Panc1 (cell line): ENCODE measurements at regions of chr10 and their contacts with region 1.

Region 1: GRCh38 chr10:58781873-58782488 is 269.3 kb downstream of the BICC1 start:
- DNase-seq: peak; percentile 52
- ATAC-seq: peak; percentile 70; the same call in 1 of the 2 replicates
- H3K4me3 ChIP-seq: no peak overlapping the region
- H3K27ac ChIP-seq: no peak overlapping the region
- H3K4me1 ChIP-seq: no peaks in the 10 kb centered on the region
- H3K27me3 ChIP-seq: no peaks in the 10 kb centered on the region
- CTCF ChIP-seq: peak; percentile 69; the same call in 1 of the 2 replicates

Region 2: GRCh38 chr10:58765910-58766309 is 16.1 kb before region 1 on chr10:
- CTCF ChIA-PET with region 1: no interaction called
- POLR2A ChIA-PET with region 1: no interaction called
- in situ Hi-C with region 1: no loop called
- intact Hi-C with region 1: no loop called
- DNase-seq: no peak
- ATAC-seq: no peak
- H3K4me3 ChIP-seq: no peak overlapping the region
- H3K27ac ChIP-seq: no peak overlapping the region
- H3K4me1 ChIP-seq: no peaks in the 10 kb centered on the region
- H3K27me3 ChIP-seq: no peaks in the 10 kb centered on the region
- CTCF ChIP-seq: no peak

Region 3: GRCh38 chr10:59181668-59182067 is 399.7 kb after region 1 on chr10:
- CTCF ChIA-PET with region 1: no interaction called
- POLR2A ChIA-PET with region 1: no interaction called
- in situ Hi-C with region 1: no loop called
- intact Hi-C with region 1: loop called (anchors 5 kb)
- DNase-seq: peak; percentile 30
- ATAC-seq: peak; percentile 89
- H3K4me3 ChIP-seq: no peak overlapping the region
- H3K27ac ChIP-seq: no peak overlapping the region
- H3K4me1 ChIP-seq: no peaks in the 10 kb centered on the region
- H3K27me3 ChIP-seq: no peaks in the 10 kb centered on the region
- CTCF ChIP-seq: peak; percentile 52; the same call in 1 of the 2 replicates

Region 4: DNA sequence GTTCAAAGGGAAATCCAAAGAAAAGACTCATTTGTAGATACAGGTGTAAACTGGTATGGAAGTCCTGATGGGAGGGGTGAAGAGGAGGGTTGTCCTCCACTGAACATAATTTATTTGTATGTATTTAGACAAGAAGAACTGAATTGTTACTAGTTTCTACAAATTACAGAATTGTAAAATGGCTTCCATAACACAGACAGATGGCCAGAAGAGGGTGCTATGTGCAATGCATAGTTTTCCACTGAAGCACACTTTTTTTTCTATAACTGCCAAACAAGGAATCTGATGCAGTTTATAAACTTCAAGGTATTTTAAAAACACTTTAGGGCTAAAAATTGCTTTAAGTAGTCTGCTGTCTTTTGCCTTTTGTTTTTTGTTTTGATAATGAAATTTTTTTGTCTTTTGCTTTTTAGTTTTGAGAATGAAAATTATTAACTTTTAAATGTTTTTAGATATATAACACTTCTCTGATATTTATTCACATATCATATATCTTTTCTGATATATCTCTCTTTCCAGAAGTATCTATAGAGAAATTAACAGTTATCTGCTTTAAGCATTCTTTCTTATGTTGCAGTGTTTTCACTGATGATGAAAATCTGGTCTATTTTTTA is 452.9 kb after region 1 on chr10:
- CTCF ChIA-PET with region 1: no interaction called
- POLR2A ChIA-PET with region 1: no interaction called
- in situ Hi-C with region 1: no loop called
- intact Hi-C with region 1: loop called (anchors 5 kb)
- DNase-seq: peak; percentile 12
- ATAC-seq: no peak
- H3K4me3 ChIP-seq: no peak overlapping the region
- H3K27ac ChIP-seq: no peak overlapping the region
- H3K4me1 ChIP-seq: no peaks in the 10 kb centered on the region
- H3K27me3 ChIP-seq: no peaks in the 10 kb centered on the region
- CTCF ChIP-seq: peak; percentile 68; the same call in 1 of the 2 replicates